ENCODE measurements at regions of chr18 and their contacts with region 1.

Region 1: DNA sequence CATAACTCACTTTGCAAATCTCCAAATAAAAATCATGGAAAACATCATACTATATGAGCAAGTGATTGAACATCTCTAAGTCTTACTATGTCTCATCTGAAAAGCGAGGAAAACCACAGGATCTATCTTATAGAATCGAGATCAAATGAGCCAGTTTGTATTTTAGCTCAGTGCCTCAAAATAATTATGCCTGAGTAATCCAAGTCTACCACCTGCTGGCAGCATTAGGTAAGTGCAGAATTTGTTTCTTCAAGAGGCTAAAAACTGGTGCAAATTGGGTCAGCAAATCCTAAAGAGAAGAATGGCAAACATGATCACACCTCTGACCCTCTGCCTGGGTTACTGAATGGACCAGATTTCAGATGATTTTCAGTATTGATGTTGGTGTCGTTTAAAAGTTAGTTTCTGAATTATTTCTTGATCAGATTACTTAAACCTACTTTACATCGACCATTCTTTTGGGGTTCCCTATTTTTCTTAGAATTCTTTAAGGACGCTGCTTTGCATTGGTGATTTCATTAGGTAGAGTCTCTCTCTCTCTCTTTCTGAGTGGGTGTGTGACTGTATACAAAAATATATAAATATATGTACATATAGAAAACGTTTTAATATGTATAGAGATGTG is 12.7 kb upstream of the FHOD3 start:
- DNase-seq: peak in 2 of 10 donors; percentile 41 to 61
- H3K4me3 ChIP-seq: no peak overlapping the region
- H3K27ac ChIP-seq: no peak overlapping the region
- H3K27me3 ChIP-seq: peaks cover 0 to 5% (median 0%) of the 10 kb centered on the region in 45 donors
- CTCF ChIP-seq: peak; percentile 78 to 99 (median 93)

Region 2: DNA sequence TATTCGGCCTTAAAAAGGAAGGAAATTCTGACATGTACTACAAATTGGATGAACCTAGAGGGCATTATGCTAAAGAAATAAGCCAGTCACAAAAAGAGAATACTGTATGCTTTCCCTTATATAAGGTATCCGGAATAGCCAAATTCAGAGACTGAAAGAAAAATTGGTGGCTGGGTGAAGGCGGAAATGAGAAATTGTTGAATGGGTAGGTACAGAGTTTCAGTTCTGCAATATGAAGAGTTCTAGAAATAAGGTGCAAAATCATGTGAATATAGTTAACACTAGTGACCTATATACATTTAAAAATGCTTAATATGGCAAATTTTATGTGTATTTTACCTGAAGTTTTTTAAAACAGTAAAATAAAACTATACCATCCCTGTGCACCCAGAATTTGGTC is 269.2 kb before region 1 on chr18:
- intact Hi-C with region 1: loop called (anchors 5 kb)
- DNase-seq: no peak
- H3K4me3 ChIP-seq: no peak overlapping the region
- H3K27ac ChIP-seq: no peak overlapping the region
- H3K27me3 ChIP-seq: no peaks in the 10 kb centered on the region
- CTCF ChIP-seq: no peak

Region 3: DNA sequence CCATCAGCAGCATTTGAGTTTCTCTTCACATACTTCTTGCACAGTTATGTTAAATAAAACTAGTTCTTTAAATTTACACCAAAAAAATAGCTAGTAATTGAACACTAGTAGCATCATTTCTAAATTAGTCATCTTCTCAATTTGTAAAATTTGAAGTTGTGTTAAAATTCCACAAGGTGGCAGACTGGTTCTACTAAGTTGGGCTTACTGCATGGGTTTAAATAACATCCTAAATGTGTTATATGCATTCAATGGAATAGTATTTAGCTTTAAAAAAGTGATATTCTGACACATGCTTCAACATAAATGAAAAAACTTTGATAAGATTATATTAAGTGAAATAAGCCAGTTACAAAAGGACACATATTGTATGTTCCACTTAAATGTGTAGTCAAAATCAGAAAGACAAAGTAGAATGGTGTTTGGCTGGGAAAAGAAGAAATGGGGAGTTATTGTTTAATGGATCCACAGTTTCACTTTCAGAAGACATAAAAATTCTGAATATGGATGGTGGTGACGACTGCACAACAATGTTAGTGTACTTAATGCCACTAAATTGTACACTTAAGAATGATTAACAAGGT is 188.8 kb before region 1 on chr18:
- intact Hi-C with region 1: loop called (anchors 2 kb)
- DNase-seq: no peak
- H3K4me3 ChIP-seq: no peak overlapping the region
- H3K27ac ChIP-seq: no peak overlapping the region
- H3K27me3 ChIP-seq: no peaks in the 10 kb centered on the region
- CTCF ChIP-seq: peak; percentile 47 to 87 (median 68)